Aorta (tissue), 5 donors: ENCODE measurements at regions of chr12 and their contacts with region 1.

Region 1: DNA sequence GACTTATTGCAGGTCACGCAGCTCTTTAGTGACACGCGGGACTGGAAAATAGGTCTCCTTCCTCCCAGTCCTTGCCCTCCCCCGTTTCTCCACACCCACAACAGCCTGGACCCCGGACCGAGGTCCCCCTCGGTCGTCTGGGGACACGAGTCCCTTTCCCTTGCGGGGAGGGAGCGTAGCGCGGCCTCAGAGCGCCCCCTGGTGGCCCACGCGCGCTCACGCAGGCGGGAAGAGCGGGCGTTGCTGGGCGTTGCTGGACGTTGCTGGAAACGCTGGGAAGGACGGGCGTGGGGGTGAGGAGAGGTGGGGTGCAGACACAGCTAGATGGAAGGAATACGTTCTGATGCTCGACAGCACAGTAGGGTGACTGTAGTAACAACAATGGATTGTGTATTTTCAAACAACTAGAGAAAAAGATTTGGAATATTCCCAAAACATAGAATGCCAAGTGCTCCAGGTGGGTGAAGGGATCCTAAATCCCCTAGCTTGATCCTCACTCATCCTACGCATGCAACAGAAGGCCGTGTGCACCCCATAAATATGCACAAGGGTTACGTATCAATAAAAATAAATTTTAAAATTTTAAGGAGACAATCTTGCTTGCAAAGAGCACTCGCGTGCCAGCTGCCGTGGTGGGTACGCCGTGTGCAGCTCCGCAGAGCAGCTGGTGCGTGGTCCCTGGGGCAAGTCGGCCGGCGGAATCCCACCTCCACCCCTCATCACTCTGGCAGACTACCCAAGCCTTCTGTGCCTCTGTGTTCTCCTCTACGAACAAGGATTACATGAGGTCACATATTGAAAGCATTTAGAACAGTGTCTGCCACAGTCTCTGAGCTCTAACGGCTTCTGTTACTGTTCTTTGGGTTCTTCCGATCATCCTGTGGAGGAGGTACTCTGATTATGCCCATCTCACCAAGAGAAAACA is 87.4 kb downstream of the B4GALNT3 start:
- DNase-seq: peak; percentile 79 to 92
- ATAC-seq: peak; percentile 90
- H3K4me3 ChIP-seq: no peak overlapping the region
- H3K27ac ChIP-seq: no peak overlapping the region
- H3K4me1 ChIP-seq: no peaks in the 10 kb centered on the region
- H3K27me3 ChIP-seq: no peaks in the 10 kb centered on the region

Region 2: DNA sequence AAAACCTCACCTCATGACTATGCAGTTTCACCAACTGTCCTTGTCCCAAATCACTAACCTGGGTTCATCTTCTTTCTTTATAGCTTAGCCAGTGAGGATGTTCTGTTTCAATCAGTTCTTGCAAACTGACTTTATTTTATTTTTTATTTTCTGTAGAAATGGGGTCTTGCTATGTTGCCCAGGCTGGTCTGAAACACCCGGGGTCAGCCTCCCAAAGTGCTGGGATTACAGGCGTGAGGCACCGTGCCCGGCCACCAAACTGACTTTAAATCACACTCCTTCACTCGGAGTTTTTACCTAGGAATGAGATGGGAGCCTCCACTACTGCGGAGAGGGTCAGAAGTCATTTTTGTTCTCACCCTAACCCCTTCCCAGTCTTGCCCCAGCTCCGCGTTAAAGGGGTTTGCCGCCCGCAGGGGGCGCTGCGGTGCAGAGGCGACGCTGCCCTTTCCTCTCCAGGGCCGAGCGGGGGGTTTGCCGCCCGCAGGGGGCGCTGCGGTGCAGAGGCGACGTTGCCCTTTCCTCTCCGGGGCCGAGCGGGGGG is 94.4 kb before region 1 on chr12:
- intact Hi-C with region 1: loop called (anchors 1 to 2 kb)
- DNase-seq: peak in 1 of 2 donors; percentile 80
- ATAC-seq: no peak
- H3K4me3 ChIP-seq: no peak overlapping the region
- H3K27ac ChIP-seq: no peak overlapping the region
- H3K4me1 ChIP-seq: no peaks in the 10 kb centered on the region
- H3K27me3 ChIP-seq: no peaks in the 10 kb centered on the region

Region 3: DNA sequence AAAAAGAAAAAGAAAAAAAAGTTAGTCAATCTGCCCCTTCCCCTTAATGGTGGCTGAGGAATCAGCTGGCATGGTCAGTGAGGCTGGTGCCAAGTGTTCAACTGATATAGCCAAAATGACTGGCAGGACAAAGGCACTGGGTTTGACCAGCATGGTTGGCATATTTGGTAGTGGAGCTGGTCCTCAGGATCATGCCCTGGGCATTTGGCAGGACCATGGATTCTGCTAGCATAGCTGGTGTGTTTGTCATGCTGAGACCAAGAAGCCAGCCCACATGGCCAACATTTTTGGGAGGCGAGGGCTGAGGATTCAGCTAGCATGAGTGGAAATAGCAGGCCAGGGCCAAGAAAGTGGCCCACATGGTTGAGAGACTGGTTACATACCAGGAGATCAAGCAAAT is 910.7 kb after region 1 on chr12:
- intact Hi-C with region 1: no loop called
- DNase-seq: peak; percentile 88 to 89
- ATAC-seq: peak; percentile 77
- H3K4me3 ChIP-seq: no peak overlapping the region
- H3K27ac ChIP-seq: peak overlapping the region in 1 of 2 donors; percentile 40
- H3K4me1 ChIP-seq: no peaks in the 10 kb centered on the region
- H3K27me3 ChIP-seq: no peaks in the 10 kb centered on the region